PC-3 (cell line): ENCODE measurements at regions of chr4 and their contacts with region 1.

Region 1: DNA sequence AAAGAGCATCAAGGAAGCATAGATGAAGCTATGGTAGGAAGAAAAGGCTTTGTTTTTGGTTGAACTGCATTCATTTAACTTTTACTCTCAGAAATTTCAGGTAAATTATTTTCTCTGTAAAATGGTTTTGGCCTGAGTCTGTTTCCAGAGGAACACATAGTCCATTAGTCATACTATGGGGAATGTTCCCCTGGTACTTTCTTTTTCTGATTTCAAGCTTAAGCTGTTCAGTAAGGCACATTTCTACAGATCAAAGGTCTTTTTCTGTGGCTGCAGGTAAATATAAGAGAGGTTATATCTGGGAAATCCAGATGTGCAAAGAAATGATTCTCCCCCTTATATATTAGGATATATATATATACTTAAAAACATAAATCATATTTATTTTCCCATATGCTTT is 1744.4 kb upstream of the ADGRL3 start:
- DNase-seq: peak; percentile 13
- ATAC-seq: 0 out of 2 replicates have a peak, but pooled peaks have one; percentile 24
- H3K4me3 ChIP-seq: no peak overlapping the region
- H3K27ac ChIP-seq: no peak overlapping the region
- H3K4me1 ChIP-seq: no peaks in the 10 kb centered on the region
- H3K27me3 ChIP-seq: no peaks in the 10 kb centered on the region
- CTCF ChIP-seq: no peak

Region 2: GRCh38 chr4:59484944-59485343 is 29.2 kb after region 1 on chr4:
- CTCF ChIA-PET with region 1: no interaction called
- POLR2A ChIA-PET with region 1: no interaction called
- intact Hi-C with region 1: loop called (anchors 1 kb)
- DNase-seq: no peak
- ATAC-seq: no peak
- H3K4me3 ChIP-seq: no peak overlapping the region
- H3K27ac ChIP-seq: no peak overlapping the region
- H3K4me1 ChIP-seq: no peaks in the 10 kb centered on the region
- H3K27me3 ChIP-seq: no peaks in the 10 kb centered on the region
- CTCF ChIP-seq: no peak

Region 3: GRCh38 chr4:59537231-59537886 is 81.6 kb after region 1 on chr4:
- CTCF ChIA-PET with region 1: no interaction called
- POLR2A ChIA-PET with region 1: no interaction called
- intact Hi-C with region 1: no loop called
- DNase-seq: peak; percentile 73
- ATAC-seq: peak; percentile 94
- H3K4me3 ChIP-seq: peak overlapping the region; percentile 46
- H3K27ac ChIP-seq: peak overlapping the region; percentile 27; the same call in 1 of the 2 replicates
- H3K4me1 ChIP-seq: peaks cover 13% of the 10 kb centered on the region
- H3K27me3 ChIP-seq: no peaks in the 10 kb centered on the region
- CTCF ChIP-seq: no peak

Region 4: DNA sequence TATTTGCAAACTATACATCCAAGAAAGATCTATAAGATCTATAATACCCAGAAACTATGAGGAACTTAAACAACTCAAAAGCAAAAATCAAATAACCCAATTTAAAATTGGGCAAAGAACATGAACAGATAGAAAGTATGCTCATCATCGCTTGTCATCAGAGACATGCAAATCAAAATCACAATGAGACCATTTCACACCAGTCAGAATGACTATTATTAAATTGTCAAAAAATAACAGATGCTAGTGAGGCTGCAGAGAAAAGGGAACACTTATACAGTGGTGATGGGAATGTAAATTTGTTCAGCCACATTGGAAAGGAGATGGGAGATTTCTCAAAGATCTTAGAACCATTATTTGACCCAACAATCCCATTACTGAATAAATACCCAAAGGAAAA is 292.7 kb after region 1 on chr4:
- CTCF ChIA-PET with region 1: no interaction called
- POLR2A ChIA-PET with region 1: no interaction called
- intact Hi-C with region 1: no loop called
- DNase-seq: no peak
- ATAC-seq: no peak
- H3K4me3 ChIP-seq: no peak overlapping the region
- H3K27ac ChIP-seq: no peak overlapping the region
- H3K4me1 ChIP-seq: no peaks in the 10 kb centered on the region
- H3K27me3 ChIP-seq: no peaks in the 10 kb centered on the region
- CTCF ChIP-seq: no peak

Region 5: DNA sequence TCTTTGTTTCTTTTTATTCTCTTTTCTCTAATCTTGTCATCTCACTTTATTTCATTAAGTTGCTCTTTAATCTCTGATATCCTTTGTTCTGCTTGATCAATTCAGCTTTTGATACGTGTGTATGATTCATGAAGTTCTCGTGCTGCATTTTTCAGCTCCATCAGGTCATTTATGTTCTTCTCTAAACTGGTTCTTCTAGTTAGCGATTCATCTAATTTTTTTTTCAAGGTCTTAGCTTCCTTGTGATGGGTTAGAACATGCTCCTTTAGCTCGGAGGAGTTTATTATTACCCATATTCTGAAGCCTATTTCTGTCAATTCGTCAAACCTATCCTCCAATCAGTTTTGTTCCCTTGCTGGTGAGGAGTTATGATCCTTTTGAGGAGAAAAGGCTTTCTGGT is 699.3 kb after region 1 on chr4:
- CTCF ChIA-PET with region 1: no interaction called
- POLR2A ChIA-PET with region 1: no interaction called
- intact Hi-C with region 1: no loop called
- DNase-seq: no peak
- ATAC-seq: no peak
- H3K4me3 ChIP-seq: no peak overlapping the region
- H3K27ac ChIP-seq: no peak overlapping the region
- H3K4me1 ChIP-seq: no peaks in the 10 kb centered on the region
- H3K27me3 ChIP-seq: no peaks in the 10 kb centered on the region
- CTCF ChIP-seq: no peak